ENCODE measurements at regions of chr12 and their contacts with region 1.

Region 1: GRCh38 chr12:94074980-94075928 is 73.1 kb upstream of the PLXNC1 start:
- DNase-seq: no peak
- H3K4me3 ChIP-seq: no peak overlapping the region
- H3K27ac ChIP-seq: peak overlapping the region; percentile 80
- H3K4me1 ChIP-seq: peaks cover 16% of the 10 kb centered on the region
- H3K27me3 ChIP-seq: no peaks in the 10 kb centered on the region
- CTCF ChIP-seq: peak in 2 of 3 experiments; percentile 12 to 56
- POLR2A ChIP-seq: no peak

Region 2: GRCh38 chr12:93682846-93683261 is 392.4 kb before region 1 on chr12:
- intact Hi-C with region 1: loop called (anchors 5 kb)
- DNase-seq: no peak
- H3K4me3 ChIP-seq: no peak overlapping the region
- H3K27ac ChIP-seq: peak overlapping the region; percentile 79
- H3K4me1 ChIP-seq: peaks cover 72% of the 10 kb centered on the region
- H3K27me3 ChIP-seq: no peaks in the 10 kb centered on the region
- CTCF ChIP-seq: no peak
- POLR2A ChIP-seq: no peak

Region 3: DNA sequence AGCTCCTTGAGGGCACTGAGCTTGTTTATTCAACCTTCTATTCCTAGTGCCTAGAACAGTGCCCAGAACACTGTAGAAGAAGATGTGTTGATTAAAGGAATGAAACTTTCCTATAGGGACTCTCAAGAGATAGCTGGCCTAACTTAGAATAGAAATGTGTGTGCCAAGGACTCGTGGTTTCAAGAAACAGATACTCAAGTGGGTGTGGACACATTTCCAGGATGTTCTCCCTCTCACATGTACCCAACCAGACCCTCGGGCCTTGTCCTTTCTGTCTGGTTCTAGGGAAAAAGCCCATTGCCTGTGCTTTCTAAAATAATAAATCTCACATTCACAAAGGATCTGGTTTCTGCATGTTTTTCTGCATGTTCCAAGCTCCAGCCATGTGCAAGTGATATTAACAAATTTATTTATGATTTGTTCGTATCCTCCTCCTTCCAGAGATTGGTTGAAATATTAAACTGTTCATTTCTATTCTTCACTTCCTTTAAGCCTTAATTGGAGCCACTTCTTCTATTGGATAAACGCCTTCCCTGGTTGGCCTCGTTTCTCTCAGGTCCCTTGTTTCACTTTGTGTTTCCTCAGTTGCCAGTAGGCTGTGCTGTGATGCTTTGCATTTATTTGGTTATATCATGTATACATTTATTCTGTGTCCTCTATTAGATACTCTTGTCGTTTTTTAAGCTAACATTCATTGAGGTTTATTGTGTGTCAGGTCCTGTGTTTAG is 308.3 kb before region 1 on chr12:
- intact Hi-C with region 1: loop called (anchors 10 kb)
- DNase-seq: no peak
- H3K4me3 ChIP-seq: no peak overlapping the region
- H3K27ac ChIP-seq: peak overlapping the region; percentile 36
- H3K4me1 ChIP-seq: peaks cover 19% of the 10 kb centered on the region
- H3K27me3 ChIP-seq: no peaks in the 10 kb centered on the region
- CTCF ChIP-seq: peak; percentile 22 to 57 (median 31)
- POLR2A ChIP-seq: no peak